SK-N-SH (cell line): ENCODE measurements at regions of chr14 and their contacts with region 1.

Region 1: DNA sequence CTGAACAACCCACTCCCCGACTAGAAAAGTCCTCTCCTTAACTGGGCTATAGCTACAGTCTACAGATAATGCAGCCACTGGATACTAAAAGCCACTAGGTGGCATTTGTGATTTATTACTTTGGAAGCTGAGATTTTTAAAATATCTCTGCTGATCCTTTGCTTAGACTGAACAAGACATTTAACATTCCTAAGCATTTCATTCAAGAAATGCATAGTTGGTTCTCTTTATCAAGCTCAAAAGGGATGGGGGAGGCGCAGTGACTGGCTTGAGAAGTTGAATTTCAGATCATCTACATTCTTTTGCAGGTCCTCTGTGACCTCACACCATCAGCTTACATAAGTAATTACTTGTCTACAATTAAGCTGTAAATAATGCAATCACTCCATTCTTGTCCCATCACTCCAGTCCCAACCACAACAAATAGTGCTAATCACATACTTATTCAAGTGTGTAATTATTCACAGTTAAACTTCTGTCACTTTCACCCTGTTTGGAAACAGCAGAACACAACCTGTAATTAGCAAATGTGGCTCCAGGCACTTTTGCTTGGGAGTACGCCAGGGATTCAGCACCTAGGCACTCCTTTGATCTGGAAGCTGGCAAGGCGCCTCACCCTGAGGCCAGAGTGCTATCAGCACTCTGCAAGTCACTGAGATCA is 203.6 kb downstream of the NOVA1 start:
- DNase-seq: peak; percentile 23
- H3K4me3 ChIP-seq: no peak overlapping the region
- H3K27ac ChIP-seq: no peak overlapping the region
- H3K4me1 ChIP-seq: no peaks in the 10 kb centered on the region
- H3K27me3 ChIP-seq: 0 out of 2 replicates have a peak, but pooled peaks cover 4% of the 10 kb centered on the region
- CTCF ChIP-seq: peak; percentile 41
- EP300 ChIP-seq: no peak
- RAD21 ChIP-seq: peak; percentile 71

Region 2: DNA sequence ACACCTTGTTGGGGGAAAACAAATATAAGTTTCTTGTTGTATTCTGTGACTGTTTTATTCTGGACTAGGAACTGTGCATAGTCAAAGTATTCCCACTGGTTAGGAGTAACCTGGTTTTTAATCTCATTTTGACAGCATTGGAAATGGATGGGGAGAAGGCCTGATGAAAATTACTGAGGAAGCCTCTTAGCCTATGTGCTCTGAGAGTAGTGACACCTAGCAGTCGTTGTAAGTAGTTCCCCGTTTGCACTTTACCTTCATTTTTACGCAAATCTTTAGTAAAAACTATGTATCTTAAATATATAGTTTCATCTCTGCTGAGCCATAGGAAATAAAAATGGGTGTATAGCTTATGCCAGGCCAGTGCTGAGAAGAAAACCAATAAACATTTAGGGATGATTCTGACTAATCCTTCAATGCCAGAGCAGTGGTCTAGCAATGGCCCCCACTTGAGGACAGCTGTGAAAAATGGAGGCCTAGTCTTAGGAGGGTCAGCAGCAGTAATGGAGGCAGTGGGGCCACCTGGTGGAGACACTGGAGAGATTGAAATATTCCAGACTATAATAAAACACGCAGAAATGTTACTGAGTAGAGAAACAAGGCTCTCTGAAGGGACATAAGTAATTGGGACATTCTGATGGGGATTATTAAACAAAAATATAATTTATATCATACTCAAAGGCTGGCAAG is 336.8 kb after region 1 on chr14:
- CTCF ChIA-PET with region 1: interaction called, 28 read pairs
- POLR2A ChIA-PET with region 1: no interaction called
- DNase-seq: peak; percentile 15
- H3K4me3 ChIP-seq: no peak overlapping the region
- H3K27ac ChIP-seq: no peak overlapping the region
- H3K4me1 ChIP-seq: no peaks in the 10 kb centered on the region
- H3K27me3 ChIP-seq: no peaks in the 10 kb centered on the region
- CTCF ChIP-seq: peak; percentile 56
- EP300 ChIP-seq: no peak
- RAD21 ChIP-seq: peak; percentile 60